Colonic mucosa (tissue), 4 donors: ENCODE measurements at regions of chr9 and their contacts with region 1.

Region 1: GRCh38 chr9:113380869-113381378 is 4.1 kb upstream of the HDHD3 start:
- DNase-seq: peak; percentile 73
- H3K4me3 ChIP-seq: no peak overlapping the region
- H3K27ac ChIP-seq: peak overlapping the region; percentile 79
- H3K4me1 ChIP-seq: no peaks in the 10 kb centered on the region
- H3K27me3 ChIP-seq: no peaks in the 10 kb centered on the region
- CTCF ChIP-seq: no peak

Region 2: DNA sequence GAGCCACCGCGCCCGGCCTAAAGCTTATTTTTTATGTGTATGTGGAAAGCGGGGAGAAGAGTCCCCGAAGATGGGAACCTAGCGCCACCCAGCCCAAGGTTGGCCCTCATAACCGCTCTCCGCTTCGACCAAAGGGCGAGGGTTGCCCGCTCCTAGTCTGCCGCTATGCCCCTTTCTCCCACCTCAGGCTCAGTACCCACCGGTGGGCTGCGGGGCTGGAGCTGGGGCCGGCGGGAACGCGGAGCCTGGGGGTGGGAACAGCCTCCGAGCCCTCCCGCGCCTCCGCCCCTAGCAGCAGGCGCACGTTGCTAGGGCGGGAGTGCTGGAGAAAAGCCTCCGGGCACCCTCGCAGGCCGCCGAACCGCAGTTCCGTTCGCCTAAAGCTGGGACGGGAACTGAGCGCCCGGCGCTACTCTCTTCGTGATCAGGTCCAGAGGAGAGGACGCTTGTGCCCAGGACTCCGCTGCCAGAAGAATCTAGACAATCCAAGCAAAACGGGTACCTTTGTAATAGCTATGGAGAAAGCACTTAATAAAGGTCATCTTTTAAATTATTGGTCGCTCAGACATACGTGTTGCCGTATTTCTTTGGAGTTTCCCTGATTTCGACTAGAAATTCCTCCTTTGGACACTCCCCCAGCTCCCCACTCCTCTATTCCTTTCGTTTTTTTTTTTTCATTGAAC is 40.8 kb before region 1 on chr9 and contains the start of gene WDR31:
- intact Hi-C with region 1: loop called (anchors 5 kb)
- DNase-seq: peak; percentile 86
- H3K4me3 ChIP-seq: peak within 1 kb of the TSS; percentile 78
- H3K27ac ChIP-seq: peak within 1 kb of the TSS; percentile 64
- H3K4me1 ChIP-seq: peaks cover 10% of the 10 kb centered on the region
- H3K27me3 ChIP-seq: no peaks in the 10 kb centered on the region
- CTCF ChIP-seq: no peak
- total RNA-seq, gene WDR31: 3.0 to 3.5 TPM